ENCODE measurements at regions of chr3 and their contacts with region 1.

Region 1: GRCh38 chr3:138928727-138929385 is 18.1 kb downstream of the FOXL2 start:
- DNase-seq: no peak
- ATAC-seq: no peak
- H3K4me3 ChIP-seq: no peak overlapping the region
- H3K27ac ChIP-seq: no peak overlapping the region
- H3K4me1 ChIP-seq: no peaks in the 10 kb centered on the region
- H3K27me3 ChIP-seq: no peaks in the 10 kb centered on the region
- CTCF ChIP-seq: no peak
- POLR2A ChIP-seq: no peak

Region 2: DNA sequence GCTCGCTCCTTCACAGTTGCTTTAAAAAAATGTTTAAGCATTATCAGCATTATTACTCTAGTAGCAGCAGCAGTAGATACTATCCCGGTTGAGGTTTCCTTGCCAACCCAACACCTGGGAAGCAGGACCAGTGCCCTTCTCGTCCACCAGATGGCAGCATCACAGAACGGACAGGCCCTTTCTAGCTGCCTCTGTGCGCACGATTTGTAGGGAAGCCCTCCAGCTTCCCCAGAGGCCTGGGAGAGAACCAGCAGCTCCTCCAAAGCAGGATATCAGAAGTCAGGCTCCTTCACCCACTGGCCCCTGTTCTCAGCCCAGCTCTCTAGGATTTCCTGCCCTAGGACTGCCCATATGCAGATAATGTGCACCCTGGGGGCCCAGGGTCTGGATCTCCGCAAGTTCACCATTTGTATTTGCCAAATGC is 511.3 kb before region 1 on chr3:
- intact Hi-C with region 1: loop called (anchors 5 kb)
- DNase-seq: peak; percentile 85 to 88 (median 87)
- ATAC-seq: peak; percentile 96
- H3K4me3 ChIP-seq: no peak overlapping the region
- H3K27ac ChIP-seq: no peak overlapping the region
- H3K4me1 ChIP-seq: no peaks in the 10 kb centered on the region
- H3K27me3 ChIP-seq: no peaks in the 10 kb centered on the region
- CTCF ChIP-seq: peak; percentile 80 to 94 (median 90)
- POLR2A ChIP-seq: no peak

Region 3: DNA sequence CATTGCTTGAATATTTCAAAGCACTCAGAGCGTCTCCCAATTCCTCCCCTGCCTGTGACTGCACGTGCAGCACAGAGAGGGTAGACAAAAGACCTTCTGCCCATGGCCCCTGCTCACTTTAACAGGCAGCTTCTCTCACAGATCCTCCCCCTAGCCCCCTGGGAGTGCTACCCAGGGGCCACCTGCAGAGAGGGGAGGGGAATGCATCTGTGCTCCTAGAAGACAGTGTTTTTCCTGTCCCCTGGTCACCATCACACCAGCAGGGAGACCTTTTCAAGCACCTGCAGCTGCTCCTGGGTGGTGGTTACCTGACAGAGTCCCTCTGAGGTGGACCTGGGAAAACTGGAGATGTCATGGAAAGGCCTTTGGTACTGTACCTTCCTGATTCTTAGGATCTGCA is 172.5 kb after region 1 on chr3:
- intact Hi-C with region 1: no loop called
- DNase-seq: no peak
- ATAC-seq: no peak
- H3K4me3 ChIP-seq: no peak overlapping the region
- H3K27ac ChIP-seq: no peak overlapping the region
- H3K4me1 ChIP-seq: peaks cover 22% of the 10 kb centered on the region
- H3K27me3 ChIP-seq: no peaks in the 10 kb centered on the region
- CTCF ChIP-seq: no peak
- POLR2A ChIP-seq: no peak